ENCODE measurements at regions of chr9 and their contacts with region 1.

Region 1: GRCh38 chr9:34493972-34494535 is 28.7 kb downstream of the ENHO start:
- DNase-seq: peak; percentile 19
- H3K4me3 ChIP-seq: no peak overlapping the region
- H3K27ac ChIP-seq: no peak overlapping the region
- H3K4me1 ChIP-seq: peaks cover 16% of the 10 kb centered on the region
- H3K27me3 ChIP-seq: no peaks in the 10 kb centered on the region
- CTCF ChIP-seq: no peak

Region 2: DNA sequence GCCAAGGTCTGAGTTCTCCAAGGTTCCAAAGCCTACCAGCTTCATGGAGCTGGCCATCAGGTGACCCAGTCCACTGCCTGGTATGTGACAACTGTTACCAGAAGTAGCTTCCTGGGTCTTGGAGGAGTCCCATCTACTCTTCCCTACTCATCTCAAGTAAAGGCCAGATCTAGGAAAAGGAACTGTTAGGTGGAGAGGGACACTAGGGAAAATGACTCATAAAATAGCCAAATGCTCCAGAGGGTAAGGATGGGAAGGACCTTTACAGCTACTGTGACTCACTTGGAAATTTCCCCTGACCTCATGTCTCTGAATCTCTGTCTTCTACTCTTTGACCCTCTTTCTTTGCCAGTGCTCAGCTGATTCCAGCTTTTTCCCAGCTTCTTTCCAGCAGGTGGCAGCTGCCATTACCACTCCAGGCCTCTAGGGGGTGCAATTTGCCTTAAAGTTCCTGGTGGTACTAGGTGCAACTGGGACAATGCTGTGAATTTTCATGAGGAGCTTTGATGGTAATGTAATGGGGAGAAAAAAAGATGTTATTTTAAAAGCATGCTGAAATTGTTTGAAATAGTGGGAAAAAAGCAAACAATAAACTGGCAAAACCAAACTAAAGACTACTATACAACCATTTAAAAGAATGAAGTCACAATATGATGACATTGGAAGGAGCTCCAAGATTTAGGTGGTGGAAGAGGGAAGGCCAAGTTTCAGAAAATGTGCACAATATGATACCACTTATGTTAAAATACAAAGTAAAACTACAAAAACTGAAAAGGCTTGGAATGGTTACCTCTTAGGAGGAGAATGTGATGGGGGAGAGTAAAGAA is 90.3 kb before region 1 on chr9:
- CTCF ChIA-PET with region 1: no interaction called
- dilution Hi-C with region 1: no loop called
- in situ Hi-C with region 1: loop called in 1 of 2 experiments (anchors 10 kb)
- intact Hi-C with region 1: no loop called
- DNase-seq: peak; percentile 45
- H3K4me3 ChIP-seq: no peak overlapping the region
- H3K27ac ChIP-seq: no peak overlapping the region
- H3K4me1 ChIP-seq: no peaks in the 10 kb centered on the region
- H3K27me3 ChIP-seq: no peaks in the 10 kb centered on the region
- CTCF ChIP-seq: peak; percentile 97 to 99

Region 3: DNA sequence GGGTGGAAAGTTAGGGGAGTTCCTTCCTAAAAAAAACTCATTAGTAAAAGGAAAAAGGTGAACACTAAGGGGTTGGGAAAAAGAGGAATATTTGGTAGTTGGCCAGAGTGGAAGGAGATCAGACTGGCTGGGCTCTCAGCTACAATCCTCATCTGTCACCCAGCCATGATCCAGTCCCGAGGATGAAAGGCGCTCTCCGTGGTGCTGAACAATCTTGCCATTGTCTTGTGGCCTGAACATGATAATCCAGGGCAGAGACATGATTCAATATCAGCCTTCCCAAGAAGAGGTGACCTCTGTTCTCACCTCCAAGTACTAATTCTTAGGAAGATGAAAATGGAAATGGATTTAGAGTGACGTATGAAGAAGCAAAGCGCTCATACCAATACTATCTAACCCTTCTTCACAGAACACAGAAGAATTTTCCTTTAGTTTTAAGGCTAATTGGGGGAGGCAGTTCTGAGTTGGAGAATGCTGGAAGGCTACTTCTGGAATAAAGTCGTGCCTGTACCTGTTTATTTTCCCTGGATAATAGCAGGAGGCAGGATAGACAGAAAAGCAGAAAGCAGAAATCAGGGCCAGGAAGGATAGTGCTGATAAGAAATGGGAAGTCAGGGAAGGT is 80.7 kb before region 1 on chr9:
- CTCF ChIA-PET with region 1: no interaction called
- dilution Hi-C with region 1: no loop called
- in situ Hi-C with region 1: loop called (anchors 10 kb)
- intact Hi-C with region 1: no loop called
- DNase-seq: peak; percentile 40
- H3K4me3 ChIP-seq: no peak overlapping the region
- H3K27ac ChIP-seq: no peak overlapping the region
- H3K4me1 ChIP-seq: no peaks in the 10 kb centered on the region
- H3K27me3 ChIP-seq: no peaks in the 10 kb centered on the region
- CTCF ChIP-seq: no peak

Region 4: DNA sequence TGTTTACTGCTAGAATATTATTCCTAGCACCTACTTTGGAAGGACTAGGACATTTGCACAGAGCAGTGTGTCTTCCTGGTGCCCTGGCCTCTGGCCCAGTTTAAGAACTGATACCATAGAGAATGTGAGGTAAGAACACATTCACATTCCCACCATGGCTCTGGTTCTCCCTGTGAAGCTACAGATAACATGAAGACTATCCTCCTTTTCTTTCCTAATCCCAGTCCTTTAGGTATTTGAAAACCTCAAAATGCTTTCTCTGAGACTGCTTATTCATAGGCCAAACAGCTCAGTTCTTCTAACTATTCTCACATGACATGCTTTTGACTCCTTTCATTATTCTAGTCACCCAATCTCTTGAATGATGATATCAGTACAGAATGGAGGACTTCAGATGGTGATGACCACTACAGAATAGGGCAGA is 47.6 kb before region 1 on chr9:
- CTCF ChIA-PET with region 1: no interaction called
- dilution Hi-C with region 1: loop called (anchors 5 kb)
- in situ Hi-C with region 1: loop called in 1 of 2 experiments (anchors 5 kb)
- intact Hi-C with region 1: no loop called
- DNase-seq: no peak
- H3K4me3 ChIP-seq: no peak overlapping the region
- H3K27ac ChIP-seq: no peak overlapping the region
- H3K4me1 ChIP-seq: peaks cover 2% of the 10 kb centered on the region
- H3K27me3 ChIP-seq: no peaks in the 10 kb centered on the region
- CTCF ChIP-seq: no peak

Region 5: DNA sequence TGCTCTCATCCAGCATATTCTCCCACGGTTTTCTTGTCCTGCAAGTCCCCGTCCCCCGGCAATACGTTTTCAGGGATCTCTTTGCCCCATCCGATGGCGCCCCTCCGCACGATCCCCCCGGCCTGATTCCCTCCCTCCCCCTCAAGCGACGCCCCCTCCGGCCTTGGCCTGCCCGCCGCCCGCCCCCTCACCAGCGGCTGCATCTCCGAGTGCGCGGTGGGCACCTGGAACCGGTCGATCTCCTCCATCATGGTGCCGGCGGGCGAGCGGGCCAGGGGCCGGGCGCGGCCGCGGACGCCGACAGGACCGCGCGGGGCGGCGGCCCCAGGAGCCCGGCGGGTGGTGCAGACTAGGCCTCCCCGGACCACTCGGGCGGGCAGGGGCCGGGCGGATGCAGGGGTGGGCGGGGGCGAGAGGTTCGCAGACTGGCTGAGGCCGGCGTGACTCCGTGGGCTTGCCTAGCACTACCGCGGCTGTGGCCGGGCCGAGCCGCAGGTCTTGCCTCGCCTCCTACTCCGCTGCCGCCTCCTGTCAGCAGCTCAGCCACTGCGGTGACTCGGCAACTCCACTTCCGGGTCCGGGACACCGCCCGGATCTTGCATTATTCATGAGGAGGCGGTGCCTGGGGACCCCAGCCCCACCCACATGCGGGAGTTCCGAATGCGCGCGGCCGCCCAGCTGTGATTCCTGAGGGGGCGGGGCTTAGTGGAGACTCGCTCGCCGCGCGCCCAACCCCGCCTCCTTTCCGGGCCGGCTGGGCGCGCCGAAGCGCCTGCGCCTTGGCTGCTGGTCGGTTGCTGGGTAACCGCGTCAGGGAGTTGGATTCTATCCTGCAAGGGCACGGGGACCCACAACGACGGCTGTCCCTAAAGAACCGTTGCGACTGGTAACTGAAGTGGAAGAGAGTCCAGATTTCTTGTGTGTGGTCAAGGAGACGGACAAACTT is 35.8 kb before region 1 on chr9 and contains the starts of genes DNAI1 and FAM219A:
- CTCF ChIA-PET with region 1: no interaction called
- dilution Hi-C with region 1: no loop called
- in situ Hi-C with region 1: loop called in 1 of 2 experiments (anchors 5 kb)
- intact Hi-C with region 1: no loop called
- DNase-seq: peak; percentile 98
- H3K4me3 ChIP-seq: peak within 1 kb of the TSS; percentile 64 to 86 (median 77)
- H3K27ac ChIP-seq: peak within 1 kb of the TSS; percentile 73
- H3K4me1 ChIP-seq: peaks cover 36% of the 10 kb centered on the region
- H3K27me3 ChIP-seq: no peaks in the 10 kb centered on the region
- CTCF ChIP-seq: no peak
- total RNA-seq, gene DNAI1: not detected
- total RNA-seq, gene FAM219A: 12.3 to 27.4 TPM

Region 6: GRCh38 chr9:34513567-34514214 is 19.6 kb after region 1 on chr9:
- CTCF ChIA-PET with region 1: no interaction called
- dilution Hi-C with region 1: no loop called
- in situ Hi-C with region 1: no loop called
- intact Hi-C with region 1: no loop called
- DNase-seq: no peak
- H3K4me3 ChIP-seq: no peak overlapping the region
- H3K27ac ChIP-seq: no peak overlapping the region
- H3K4me1 ChIP-seq: no peaks in the 10 kb centered on the region
- H3K27me3 ChIP-seq: no peaks in the 10 kb centered on the region
- CTCF ChIP-seq: no peak

Region 7: DNA sequence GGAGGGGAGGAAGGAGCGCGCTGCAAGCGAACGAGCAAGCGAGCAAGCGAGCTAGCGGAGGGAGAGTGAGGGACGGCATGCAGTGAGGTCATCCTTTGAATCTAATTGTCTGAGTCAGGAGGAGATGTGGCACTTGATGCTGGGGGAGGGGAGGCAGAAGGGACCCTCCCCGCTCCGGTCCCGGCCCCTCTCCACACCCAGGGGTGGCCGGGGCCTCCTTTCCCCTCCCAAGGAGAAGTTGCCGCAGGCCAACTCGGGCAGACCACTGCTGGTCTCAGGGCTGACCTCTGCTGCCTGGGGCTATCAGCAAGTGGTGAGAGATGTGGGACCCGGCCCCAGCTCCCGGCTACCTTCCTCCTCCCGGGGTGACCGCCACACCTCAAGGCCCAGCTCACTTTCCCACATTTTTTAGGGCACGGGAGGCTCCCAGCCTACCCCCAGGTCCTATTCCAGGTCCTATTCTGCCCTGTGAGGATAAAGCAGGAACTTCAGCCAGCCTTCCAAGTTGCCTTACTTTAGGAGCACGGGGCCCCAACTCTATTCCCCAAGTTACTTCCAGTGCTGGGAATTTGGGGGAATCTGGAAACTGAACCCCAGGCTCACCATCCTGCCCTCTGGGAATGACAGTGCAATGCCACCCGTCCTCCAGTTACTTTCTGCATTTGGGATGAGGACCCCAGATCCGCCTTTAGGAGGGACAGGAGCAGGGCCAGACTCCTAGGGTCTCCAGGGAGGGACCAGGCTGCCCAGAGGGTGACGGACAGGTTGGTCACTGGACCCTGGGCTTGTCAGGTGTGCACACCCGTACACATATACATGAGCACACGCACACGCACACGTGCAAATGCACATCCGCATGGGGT is 84.4 kb after region 1 on chr9:
- CTCF ChIA-PET with region 1: no interaction called
- dilution Hi-C with region 1: loop called (anchors 5 kb)
- in situ Hi-C with region 1: no loop called
- intact Hi-C with region 1: no loop called
- DNase-seq: no peak
- H3K4me3 ChIP-seq: no peak overlapping the region
- H3K27ac ChIP-seq: no peak overlapping the region
- H3K4me1 ChIP-seq: no peaks in the 10 kb centered on the region
- H3K27me3 ChIP-seq: peaks cover 15% of the 10 kb centered on the region
- CTCF ChIP-seq: no peak

Measured in mammary epithelial cell (primary cell).